ENCODE measurements at regions of chr5 and their contacts with region 1.

Region 1: DNA sequence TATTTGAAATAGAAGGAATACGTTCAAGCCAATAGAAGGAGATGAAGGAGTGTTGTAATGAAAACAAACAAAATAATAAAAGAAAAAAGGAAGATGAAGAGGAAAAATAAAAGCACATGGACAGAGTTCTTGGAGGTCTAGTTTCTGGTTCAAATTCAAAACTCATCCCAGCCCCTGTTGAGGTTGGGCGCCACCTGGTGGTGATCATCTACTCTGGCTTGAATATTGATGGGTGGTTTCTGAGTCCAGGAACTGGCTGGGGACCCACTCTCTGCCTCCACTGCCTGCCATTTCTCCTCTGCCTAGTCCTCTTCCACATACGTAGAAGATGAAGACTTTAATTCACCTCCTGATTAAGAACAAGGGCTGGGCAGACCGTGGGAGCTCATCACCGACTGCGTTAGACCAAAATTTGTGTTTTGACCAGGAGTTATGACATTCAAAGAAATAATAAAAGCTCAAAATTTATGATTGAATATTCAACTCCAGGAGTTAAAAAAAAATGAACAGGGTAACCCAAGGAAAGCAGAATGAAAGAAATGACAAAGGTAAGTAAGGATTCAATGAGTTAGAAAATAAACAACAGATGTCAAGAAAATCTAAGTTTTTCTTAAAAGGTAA is 99.0 kb upstream of the SLC1A3 start:
- DNase-seq: peak; percentile 87
- H3K4me3 Mint-ChIP-seq: no peak overlapping the region
- H3K27ac Mint-ChIP-seq: no peak overlapping the region
- H3K4me1 Mint-ChIP-seq: no peaks in the 10 kb centered on the region
- H3K27me3 Mint-ChIP-seq: peaks cover 5% of the 10 kb centered on the region

Region 2: GRCh38 chr5:36414869-36415282 is 92.6 kb before region 1 on chr5:
- CTCF ChIA-PET with region 1: interaction called, 30 read pairs
- intact Hi-C with region 1: loop called (anchors 1 kb)
- DNase-seq: no peak
- H3K4me3 Mint-ChIP-seq: no peak overlapping the region
- H3K27ac Mint-ChIP-seq: no peak overlapping the region
- H3K4me1 Mint-ChIP-seq: no peaks in the 10 kb centered on the region
- H3K27me3 Mint-ChIP-seq: peaks cover 7% of the 10 kb centered on the region

Region 3: GRCh38 chr5:36690041-36690961 is 182.9 kb after region 1 on chr5:
- CTCF ChIA-PET with region 1: interaction called, 5 read pairs
- intact Hi-C with region 1: loop called (anchors 2 kb)
- DNase-seq: peak; percentile 79
- H3K4me3 Mint-ChIP-seq: peak overlapping the region; percentile 81
- H3K27ac Mint-ChIP-seq: no peak overlapping the region
- H3K4me1 Mint-ChIP-seq: peaks cover 12% of the 10 kb centered on the region
- H3K27me3 Mint-ChIP-seq: peaks cover 37% of the 10 kb centered on the region

Region 4: GRCh38 chr5:36695677-36696673 is 188.5 kb after region 1 on chr5:
- CTCF ChIA-PET with region 1: interaction called, 7 read pairs
- intact Hi-C with region 1: loop called (anchors 1 kb)
- DNase-seq: peak; percentile 72
- H3K4me3 Mint-ChIP-seq: no peak overlapping the region
- H3K27ac Mint-ChIP-seq: no peak overlapping the region
- H3K4me1 Mint-ChIP-seq: peaks cover 3% of the 10 kb centered on the region
- H3K27me3 Mint-ChIP-seq: peaks cover 21% of the 10 kb centered on the region

Measured in activated naive CD4-positive, alpha-beta T cell treated with anti-CD3 and anti-CD28 coated beads for 36 hours (primary cell).